ENCODE measurements at regions of chr12 and their contacts with region 1.

Region 1: GRCh38 chr12:89470741-89471509 is 53.7 kb downstream of the GALNT4 start:
- DNase-seq: no peak
- H3K4me3 ChIP-seq: no peak overlapping the region
- H3K27ac ChIP-seq: no peak overlapping the region
- H3K4me1 ChIP-seq: no peaks in the 10 kb centered on the region
- H3K27me3 ChIP-seq: no peaks in the 10 kb centered on the region
- CTCF ChIP-seq: peak in 2 of 3 donors; percentile 21 to 46
- POLR2A ChIP-seq: no peak

Region 2: GRCh38 chr12:89524541-89525285 is 53.8 kb after region 1 on chr12 and contains the start of gene GALNT4:
- intact Hi-C with region 1: loop called (anchors 10 kb)
- DNase-seq: peak; percentile 75 to 89
- H3K4me3 ChIP-seq: peak within 1 kb of the TSS; percentile 85 to 99 (median 98)
- H3K27ac ChIP-seq: peak within 1 kb of the TSS; percentile 93 to 97
- H3K4me1 ChIP-seq: peaks cover 0 to 10% of the 10 kb centered on the region in 2 donors
- H3K27me3 ChIP-seq: no peaks in the 10 kb centered on the region
- CTCF ChIP-seq: peak; percentile 69 to 79 (median 70)
- POLR2A ChIP-seq: no peak
- total RNA-seq, gene GALNT4: 5.3 to 11.1 (median 7.2) TPM

Region 3: DNA sequence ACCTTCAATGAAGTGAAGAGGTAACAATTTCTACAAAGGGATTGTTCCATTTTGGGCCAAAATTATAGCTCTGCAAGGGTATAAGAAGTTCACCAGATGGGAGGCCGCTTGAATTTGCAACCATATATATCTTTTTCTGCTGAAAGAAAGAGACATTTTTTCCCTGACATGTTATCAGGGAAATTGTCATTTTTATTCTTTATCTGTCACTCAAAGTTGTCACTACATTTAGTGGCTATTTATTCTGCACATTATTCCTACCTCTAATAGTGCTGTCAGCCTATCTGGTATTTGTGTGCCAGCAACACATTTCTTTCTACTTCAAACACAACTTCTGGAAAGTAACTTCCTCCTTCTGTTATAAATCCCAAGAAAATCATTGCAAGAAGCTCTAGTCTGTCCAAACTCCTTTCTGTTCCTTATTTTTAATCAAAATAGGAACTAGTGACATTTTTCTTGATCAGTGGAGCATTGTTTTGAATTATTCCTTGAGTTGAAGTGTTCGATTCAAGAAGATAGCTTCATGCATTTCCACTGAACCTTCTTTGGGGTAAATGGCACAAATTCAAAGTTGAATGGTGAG is 375.6 kb after region 1 on chr12:
- intact Hi-C with region 1: loop called (anchors 5 kb)
- DNase-seq: no peak
- H3K4me3 ChIP-seq: no peak overlapping the region
- H3K27ac ChIP-seq: no peak overlapping the region
- H3K4me1 ChIP-seq: no peaks in the 10 kb centered on the region
- H3K27me3 ChIP-seq: no peaks in the 10 kb centered on the region
- CTCF ChIP-seq: no peak
- POLR2A ChIP-seq: no peak

Measured in breast epithelium (tissue), 4 donors.